Gastrocnemius medialis (tissue), 4 donors: ENCODE measurements at regions of chr5 and their contacts with region 1.

Region 1: GRCh38 chr5:146971401-146971800 is 92.8 kb upstream of the PPP2R2B start:
- DNase-seq: no peak
- ATAC-seq: no peak
- H3K4me3 ChIP-seq: no peak overlapping the region
- H3K27ac ChIP-seq: no peak overlapping the region
- H3K4me1 ChIP-seq: no peaks in the 10 kb centered on the region
- H3K27me3 ChIP-seq: no peaks in the 10 kb centered on the region
- CTCF ChIP-seq: no peak
- POLR2A ChIP-seq: no peak

Region 2: GRCh38 chr5:146541958-146542849 is 429.2 kb before region 1 on chr5:
- in situ Hi-C with region 1: loop called in 3 of 4 experiments (anchors 5 to 10 kb)
- intact Hi-C with region 1: no loop called
- DNase-seq: peak; percentile 28 to 47
- ATAC-seq: peak; percentile 62 to 87
- H3K4me3 ChIP-seq: no peak overlapping the region
- H3K27ac ChIP-seq: no peak overlapping the region
- H3K4me1 ChIP-seq: no peaks in the 10 kb centered on the region
- H3K27me3 ChIP-seq: no peaks in the 10 kb centered on the region
- CTCF ChIP-seq: peak; percentile 48 to 76 (median 63)
- POLR2A ChIP-seq: no peak

Region 3: DNA sequence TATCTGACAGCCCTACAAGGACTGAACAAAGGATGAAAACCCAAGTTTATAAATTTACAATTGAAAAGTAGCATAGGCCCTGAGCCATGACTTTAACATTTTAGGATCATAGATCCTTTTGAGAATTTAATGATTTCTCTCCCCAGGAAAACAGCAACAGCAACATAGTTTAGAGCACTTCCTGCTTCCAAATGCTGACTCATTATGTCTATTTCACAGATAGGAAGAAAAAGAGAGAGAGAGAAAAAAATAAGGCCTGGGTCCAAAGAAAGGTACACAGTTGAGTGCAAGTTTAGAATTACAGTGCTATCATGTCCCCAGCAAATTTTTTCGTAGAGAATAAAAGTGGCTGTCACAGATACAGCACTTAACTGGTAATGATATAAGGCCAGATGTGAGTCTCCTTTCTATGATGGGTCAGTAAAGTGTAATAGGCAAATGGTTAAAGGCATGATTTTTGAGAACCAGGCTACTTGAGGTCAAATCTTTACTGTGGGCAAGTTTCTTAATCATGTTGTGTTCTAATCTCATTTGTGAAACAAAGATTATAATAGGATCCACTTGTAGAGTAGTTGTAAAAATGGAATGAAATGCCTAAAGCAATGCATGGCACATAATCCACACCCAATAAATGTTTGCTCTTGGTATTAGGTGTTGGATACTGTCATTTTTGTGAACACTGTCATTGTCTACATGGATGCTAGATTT is 80.5 kb before region 1 on chr5:
- in situ Hi-C with region 1: no loop called
- intact Hi-C with region 1: no loop called
- DNase-seq: no peak
- ATAC-seq: no peak
- H3K4me3 ChIP-seq: no peak overlapping the region
- H3K27ac ChIP-seq: no peak overlapping the region
- H3K4me1 ChIP-seq: no peaks in the 10 kb centered on the region
- H3K27me3 ChIP-seq: no peaks in the 10 kb centered on the region
- CTCF ChIP-seq: no peak
- POLR2A ChIP-seq: no peak

Region 4: GRCh38 chr5:147051193-147051592 is 79.8 kb after region 1 on chr5:
- in situ Hi-C with region 1: no loop called
- intact Hi-C with region 1: no loop called
- DNase-seq: no peak
- ATAC-seq: no peak
- H3K4me3 ChIP-seq: no peak overlapping the region
- H3K27ac ChIP-seq: no peak overlapping the region
- H3K4me1 ChIP-seq: no peaks in the 10 kb centered on the region
- H3K27me3 ChIP-seq: peaks cover 0 to 8% (median 0%) of the 10 kb centered on the region in 3 donors
- CTCF ChIP-seq: no peak
- POLR2A ChIP-seq: no peak